ENCODE measurements at regions of chr3 and their contacts with region 1.

Region 1: GRCh38 chr3:16529264-16529663 is 15.8 kb upstream of the RFTN1 start:
- DNase-seq: peak in 2 of 9 experiments; percentile 40 to 61
- ATAC-seq: peak; percentile 77
- H3K4me3 ChIP-seq: no peak overlapping the region
- H3K4me3 Mint-ChIP-seq: no peak overlapping the region
- H3K27ac ChIP-seq: no peak overlapping the region
- H3K27ac Mint-ChIP-seq: peak overlapping the region; percentile 2
- H3K4me1 ChIP-seq: peaks cover 6% of the 10 kb centered on the region
- H3K4me1 Mint-ChIP-seq: peaks cover 10% of the 10 kb centered on the region
- H3K27me3 ChIP-seq: no peaks in the 10 kb centered on the region
- H3K27me3 Mint-ChIP-seq: no peaks in the 10 kb centered on the region
- CTCF ChIP-seq: peak; percentile 40

Region 2: DNA sequence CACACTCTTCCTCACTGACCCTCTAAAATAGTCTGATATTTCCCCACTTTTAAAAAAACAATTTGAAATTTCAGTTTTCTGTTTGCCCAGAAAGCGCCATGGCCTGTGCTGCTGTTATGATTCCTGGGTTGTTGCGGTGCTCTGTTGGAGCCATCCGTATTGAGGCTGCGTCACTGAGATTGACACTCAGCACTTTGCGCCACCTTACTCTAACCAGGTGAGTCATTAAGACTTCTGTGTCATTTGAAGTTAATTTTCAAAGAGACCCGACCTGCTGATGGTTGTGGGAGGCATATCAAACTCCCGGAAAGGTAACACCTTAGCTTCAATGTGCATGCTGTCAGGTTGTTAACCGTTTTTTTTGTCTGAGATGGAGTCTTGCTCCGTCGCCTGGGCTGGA is 258.4 kb before region 1 on chr3:
- CTCF ChIA-PET with region 1: interaction called, 13 read pairs
- POLR2A ChIA-PET with region 1: no interaction called
- intact Hi-C with region 1: loop called in 1 of 2 experiments (anchors 1 kb)
- DNase-seq: no peak
- ATAC-seq: peak; percentile 26
- H3K4me3 ChIP-seq: no peak overlapping the region
- H3K4me3 Mint-ChIP-seq: no peak overlapping the region
- H3K27ac ChIP-seq: no peak overlapping the region
- H3K27ac Mint-ChIP-seq: no peak overlapping the region
- H3K4me1 ChIP-seq: peaks cover 10% of the 10 kb centered on the region
- H3K4me1 Mint-ChIP-seq: peaks cover 28% of the 10 kb centered on the region
- H3K27me3 ChIP-seq: no peaks in the 10 kb centered on the region
- H3K27me3 Mint-ChIP-seq: no peaks in the 10 kb centered on the region
- CTCF ChIP-seq: no peak

Region 3: GRCh38 chr3:16516695-16517481 is 12.4 kb before region 1 on chr3:
- CTCF ChIA-PET with region 1: interaction called, 15 read pairs
- POLR2A ChIA-PET with region 1: interaction called, 4 read pairs
- intact Hi-C with region 1: loop called in 1 of 2 experiments (anchors 1 kb)
- DNase-seq: peak in 2 of 9 experiments; percentile 41 to 60
- ATAC-seq: no peak
- H3K4me3 ChIP-seq: no peak overlapping the region
- H3K4me3 Mint-ChIP-seq: peak overlapping the region; percentile 96
- H3K27ac ChIP-seq: peak overlapping the region in 1 of 2 experiments; percentile 74
- H3K27ac Mint-ChIP-seq: peak overlapping the region; percentile 16
- H3K4me1 ChIP-seq: peaks cover 42% of the 10 kb centered on the region
- H3K4me1 Mint-ChIP-seq: peaks cover 55% of the 10 kb centered on the region
- H3K27me3 ChIP-seq: no peaks in the 10 kb centered on the region
- H3K27me3 Mint-ChIP-seq: no peaks in the 10 kb centered on the region
- CTCF ChIP-seq: no peak

Region 4: GRCh38 chr3:16550676-16551341 is 21.5 kb after region 1 on chr3:
- CTCF ChIA-PET with region 1: interaction called, 11 read pairs
- POLR2A ChIA-PET with region 1: no interaction called
- intact Hi-C with region 1: no loop called
- DNase-seq: peak; percentile 51 to 89 (median 73)
- ATAC-seq: peak; percentile 100
- H3K4me3 ChIP-seq: no peak overlapping the region
- H3K4me3 Mint-ChIP-seq: no peak overlapping the region
- H3K27ac ChIP-seq: no peak overlapping the region
- H3K27ac Mint-ChIP-seq: peak overlapping the region; percentile 60
- H3K4me1 ChIP-seq: no peaks in the 10 kb centered on the region
- H3K4me1 Mint-ChIP-seq: peaks cover 3% of the 10 kb centered on the region
- H3K27me3 ChIP-seq: no peaks in the 10 kb centered on the region
- H3K27me3 Mint-ChIP-seq: no peaks in the 10 kb centered on the region
- CTCF ChIP-seq: peak; percentile 87

Region 5: DNA sequence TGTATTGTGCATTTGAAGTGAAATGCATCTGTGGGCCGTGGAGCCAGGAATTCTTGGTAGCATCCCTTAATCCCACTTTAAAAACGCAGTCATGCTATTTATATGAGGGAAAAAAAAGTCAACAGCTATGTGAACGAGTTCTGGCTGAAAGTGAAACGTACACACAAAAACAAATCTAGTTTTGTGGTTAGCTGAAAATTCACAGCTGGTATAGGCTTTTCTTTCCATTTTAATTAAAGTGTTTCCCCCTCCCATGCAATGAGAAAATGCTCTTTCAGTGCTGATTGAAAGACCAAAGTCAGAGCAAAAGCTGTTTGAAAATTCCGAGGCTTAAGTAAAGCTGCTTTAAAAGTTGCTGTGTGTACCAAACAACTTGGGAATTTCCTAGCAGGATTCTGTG is 652.9 kb after region 1 on chr3:
- CTCF ChIA-PET with region 1: no interaction called
- POLR2A ChIA-PET with region 1: no interaction called
- intact Hi-C with region 1: no loop called
- DNase-seq: peak in 1 of 9 experiments; percentile 39
- ATAC-seq: no peak
- H3K4me3 ChIP-seq: no peak overlapping the region
- H3K4me3 Mint-ChIP-seq: no peak overlapping the region
- H3K27ac ChIP-seq: no peak overlapping the region
- H3K27ac Mint-ChIP-seq: no peak overlapping the region
- H3K4me1 ChIP-seq: peaks cover 13% of the 10 kb centered on the region
- H3K4me1 Mint-ChIP-seq: peaks cover 20% of the 10 kb centered on the region
- H3K27me3 ChIP-seq: no peaks in the 10 kb centered on the region
- H3K27me3 Mint-ChIP-seq: no peaks in the 10 kb centered on the region
- CTCF ChIP-seq: no peak